ENCODE measurements at regions of chr15 and their contacts with region 1.

Region 1: GRCh38 chr15:92903941-92904831 is 4.1 kb downstream of the CHD2 start:
- DNase-seq: peak; percentile 99
- H3K4me3 Mint-ChIP-seq: peak overlapping the region; percentile 94
- H3K27ac Mint-ChIP-seq: peak overlapping the region; percentile 100
- H3K4me1 Mint-ChIP-seq: peaks cover 57% of the 10 kb centered on the region
- H3K27me3 Mint-ChIP-seq: no peaks in the 10 kb centered on the region

Region 2: DNA sequence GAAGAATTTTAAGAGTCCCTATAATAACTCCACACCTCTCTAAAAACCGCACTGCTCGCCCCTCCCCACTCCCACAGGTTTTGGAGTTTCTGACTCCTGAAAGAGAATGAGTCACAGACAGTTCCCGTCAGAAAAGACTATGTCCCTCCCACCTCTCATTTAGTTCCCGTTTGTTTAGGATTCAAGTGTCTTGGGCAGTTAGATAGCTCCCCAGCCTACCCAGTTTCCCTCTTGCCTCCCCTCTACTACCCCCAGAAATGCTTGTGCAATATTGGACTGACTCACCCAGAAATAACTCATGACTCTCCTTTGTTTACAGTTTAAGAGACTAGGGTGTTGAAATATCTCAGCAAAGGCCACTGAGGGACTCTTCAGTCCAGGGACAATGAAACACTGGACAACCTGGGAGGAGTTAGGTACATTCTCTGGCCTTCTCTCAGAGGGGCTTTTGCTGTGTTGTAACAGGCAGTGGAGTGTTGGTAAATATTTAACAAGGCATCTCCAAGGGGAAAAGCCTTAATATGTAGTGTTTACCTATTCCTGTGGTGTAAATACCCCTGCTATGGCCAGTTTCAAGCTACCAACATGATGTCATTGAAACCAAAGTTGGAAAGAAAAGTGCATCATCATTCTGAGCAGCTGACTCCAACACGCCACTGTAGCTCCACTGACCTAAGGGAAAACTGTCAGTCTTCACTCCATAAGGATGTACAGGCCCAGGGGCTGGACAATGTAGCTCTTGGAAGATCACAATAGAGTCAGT is 100.2 kb before region 1 on chr15:
- intact Hi-C with region 1: loop called (anchors 1 kb)
- DNase-seq: peak; percentile 40
- H3K4me3 Mint-ChIP-seq: no peak overlapping the region
- H3K27ac Mint-ChIP-seq: peak overlapping the region; percentile 86
- H3K4me1 Mint-ChIP-seq: peaks cover 32% of the 10 kb centered on the region
- H3K27me3 Mint-ChIP-seq: no peaks in the 10 kb centered on the region

Region 3: GRCh38 chr15:92831655-92832328 is 72.4 kb before region 1 on chr15:
- intact Hi-C with region 1: loop called (anchors 1 kb)
- DNase-seq: peak; percentile 89
- H3K4me3 Mint-ChIP-seq: peak overlapping the region; percentile 61
- H3K27ac Mint-ChIP-seq: peak overlapping the region; percentile 95
- H3K4me1 Mint-ChIP-seq: peaks cover 40% of the 10 kb centered on the region
- H3K27me3 Mint-ChIP-seq: no peaks in the 10 kb centered on the region

Region 4: GRCh38 chr15:92889390-92890107 is 14.6 kb before region 1 on chr15:
- intact Hi-C with region 1: loop called (anchors 1 kb)
- DNase-seq: no peak
- H3K4me3 Mint-ChIP-seq: peak overlapping the region; percentile 54
- H3K27ac Mint-ChIP-seq: peak overlapping the region; percentile 87
- H3K4me1 Mint-ChIP-seq: peaks cover 61% of the 10 kb centered on the region
- H3K27me3 Mint-ChIP-seq: no peaks in the 10 kb centered on the region

Region 5: DNA sequence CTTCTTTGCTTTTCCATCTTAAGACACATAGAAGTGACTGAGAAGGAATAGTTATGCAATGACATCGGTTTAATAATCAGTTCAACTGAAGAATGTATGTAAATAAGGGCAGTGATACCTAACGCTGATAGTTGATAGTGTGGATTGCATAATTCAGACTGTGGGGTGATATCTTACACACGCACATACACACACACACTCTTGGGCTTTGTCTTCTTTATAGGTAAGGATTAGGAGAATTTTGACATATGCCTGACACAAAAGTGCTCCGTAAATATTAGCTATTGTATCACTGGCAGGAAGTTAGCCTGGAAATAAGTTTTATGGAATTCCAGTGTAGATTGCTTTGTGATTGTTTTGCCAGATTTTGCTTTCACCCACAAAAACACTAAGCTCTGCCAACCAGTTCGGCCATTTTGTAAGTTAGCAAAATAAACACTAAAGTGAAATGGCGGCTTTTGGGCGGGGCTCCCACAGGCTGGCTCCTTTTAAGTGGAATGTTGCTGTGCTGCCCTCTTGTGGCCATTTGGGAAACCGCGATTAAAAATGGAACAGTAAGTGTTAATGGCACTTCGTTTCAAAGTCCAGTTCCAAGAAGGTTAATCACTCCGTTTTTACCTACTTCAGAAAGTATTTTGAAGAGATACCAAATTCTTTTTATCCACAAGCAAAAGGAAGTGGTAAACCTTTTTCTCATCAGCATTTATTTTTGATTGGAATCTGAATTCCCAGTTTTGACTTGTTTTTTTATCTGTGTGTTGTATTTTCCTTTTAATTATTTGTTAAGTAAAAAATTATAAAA is 13.6 kb after region 1 on chr15:
- intact Hi-C with region 1: loop called (anchors 1 kb)
- DNase-seq: peak; percentile 87
- H3K4me3 Mint-ChIP-seq: peak overlapping the region; percentile 33
- H3K27ac Mint-ChIP-seq: peak overlapping the region; percentile 82
- H3K4me1 Mint-ChIP-seq: peaks cover 77% of the 10 kb centered on the region
- H3K27me3 Mint-ChIP-seq: no peaks in the 10 kb centered on the region